Right ventricle myocardium inferior (tissue), 1 donor: ENCODE measurements at regions of chr19 and their contacts with region 1.

Region 1: GRCh38 chr19:48899781-48900476 is at the start of gene NUCB1:
- DNase-seq: peak; percentile 99
- ATAC-seq: peak; percentile 98
- total RNA-seq, gene NUCB1: 246 TPM

Region 2: GRCh38 chr19:48858984-48859710 is 40.8 kb before region 1 on chr19:
- intact Hi-C with region 1: no loop called
- DNase-seq: no peak
- ATAC-seq: peak; percentile 3

Region 3: DNA sequence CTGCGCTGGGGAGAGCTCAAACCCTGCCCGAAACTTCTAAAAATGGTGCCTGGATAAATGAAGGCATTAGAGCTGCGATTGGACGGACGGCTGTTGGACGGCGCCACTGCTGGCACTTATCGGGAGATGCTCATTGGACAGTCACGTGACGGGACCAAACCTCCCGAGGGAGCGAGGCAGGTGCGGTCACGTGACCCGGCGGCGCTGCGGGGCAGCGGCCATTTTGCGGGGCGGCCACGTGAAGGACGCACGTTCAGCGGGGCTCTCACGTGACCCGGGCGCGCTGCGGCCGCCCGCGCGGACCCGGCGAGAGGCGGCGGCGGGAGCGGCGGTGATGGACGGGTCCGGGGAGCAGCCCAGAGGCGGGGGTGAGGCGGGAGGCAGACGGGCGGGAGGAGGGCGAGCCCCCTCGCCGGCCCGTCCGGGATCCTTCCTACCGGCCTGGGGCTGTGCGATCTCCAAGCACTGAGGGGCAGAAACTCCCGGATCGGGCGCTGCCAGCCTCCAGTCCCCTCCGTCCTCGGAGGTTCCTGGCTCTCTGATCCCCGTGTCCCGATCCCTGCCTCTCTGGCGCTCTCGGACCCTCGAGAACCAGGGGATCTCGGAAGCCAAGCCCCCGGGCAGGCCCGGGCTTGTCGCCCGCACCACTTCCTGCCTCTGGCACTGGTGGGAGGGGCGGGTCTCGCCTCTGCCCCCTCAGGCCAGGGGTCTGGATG is 54.8 kb after region 1 on chr19 and contains the start of gene BAX:
- intact Hi-C with region 1: loop called (anchors 5 kb)
- DNase-seq: peak; percentile 98
- ATAC-seq: peak; percentile 94
- total RNA-seq, gene BAX: 22.4 TPM